SK-N-SH (cell line): ENCODE measurements at regions of chr16 and their contacts with region 1.

Region 1: DNA sequence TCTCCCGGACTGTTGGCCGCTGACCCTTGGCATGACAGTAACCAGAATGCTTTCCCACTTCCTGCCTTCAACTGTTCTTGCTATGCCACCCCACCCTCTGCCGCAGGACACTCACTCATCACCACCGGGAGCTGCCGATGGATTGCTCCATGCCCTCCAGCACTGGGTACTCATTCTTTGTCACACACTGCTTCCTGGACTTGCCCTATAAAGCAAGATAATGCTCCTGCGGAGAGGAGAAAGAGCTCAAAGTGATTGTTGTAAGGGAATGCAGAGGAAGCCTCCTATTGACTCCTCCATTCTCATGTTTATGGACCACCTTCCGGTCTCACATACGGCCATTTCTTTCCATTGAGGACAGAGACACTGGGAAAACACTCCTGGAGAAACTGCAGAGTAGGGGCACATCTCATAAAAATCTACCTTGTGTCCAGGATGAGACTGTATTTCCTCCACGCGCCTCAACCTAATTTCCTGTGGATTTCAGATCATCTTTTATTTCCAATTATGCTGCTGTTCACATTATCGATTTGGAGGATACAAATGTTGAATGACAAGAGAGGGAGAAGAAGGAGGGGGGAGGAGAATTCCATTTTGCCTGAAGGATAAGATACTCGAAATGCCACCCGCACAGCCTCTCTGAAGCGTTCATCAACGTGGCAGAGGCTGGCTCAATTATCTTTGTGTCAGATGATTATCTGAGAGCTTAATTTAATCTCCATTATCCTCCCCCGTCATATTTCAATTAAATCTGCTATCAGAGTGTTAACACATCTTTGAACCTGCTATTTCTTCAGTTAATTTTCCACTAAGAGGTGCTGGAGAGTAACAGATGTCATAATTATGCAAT is 486.1 kb upstream of the SALL1 start:
- DNase-seq: peak; percentile 48
- H3K4me3 ChIP-seq: peak overlapping the region; percentile 32 to 46
- H3K27ac ChIP-seq: peak overlapping the region in 1 of 2 experiments; percentile 63; a peak in 3 of 4 replicates
- H3K4me1 ChIP-seq: peaks cover 23 to 27% of the 10 kb centered on the region in 2 experiments
- H3K27me3 ChIP-seq: no peaks in the 10 kb centered on the region
- CTCF ChIP-seq: no peak
- EP300 ChIP-seq: peak; percentile 27 to 28; a peak in 1 of 4 replicates
- RAD21 ChIP-seq: peak; percentile 7

Region 2: GRCh38 chr16:51624080-51624775 is 12.9 kb before region 1 on chr16:
- CTCF ChIA-PET with region 1: interaction called, 11 read pairs
- POLR2A ChIA-PET with region 1: no interaction called
- DNase-seq: peak; percentile 70
- H3K4me3 ChIP-seq: peak overlapping the region in 1 of 2 experiments; percentile 23; a peak in 2 of 4 replicates
- H3K27ac ChIP-seq: peak overlapping the region; percentile 20 to 92; a peak in 3 of 4 replicates
- H3K4me1 ChIP-seq: peaks cover 12 to 22% of the 10 kb centered on the region in 2 experiments; a peak in 3 of 4 replicates
- H3K27me3 ChIP-seq: no peaks in the 10 kb centered on the region
- CTCF ChIP-seq: no peak
- EP300 ChIP-seq: peak in 1 of 2 experiments; percentile 93; a peak in 2 of 4 replicates
- RAD21 ChIP-seq: peak; percentile 37